ENCODE measurements at regions of chr13 and their contacts with region 1.

Region 1: GRCh38 chr13:29428310-29429181 is 166.9 kb downstream of the SLC7A1 start:
- DNase-seq: no peak
- H3K4me3 ChIP-seq: peak overlapping the region; percentile 52 to 63 (median 59)
- H3K27ac ChIP-seq: peak overlapping the region; percentile 77 to 84 (median 80)
- H3K4me1 ChIP-seq: peaks cover 8 to 39% (median 28%) of the 10 kb centered on the region in 4 donors
- H3K27me3 ChIP-seq: peaks cover 0 to 10% (median 0%) of the 10 kb centered on the region in 4 donors
- CTCF ChIP-seq: peak in 1 of 3 experiments; percentile 35
- EP300 ChIP-seq: no peak
- POLR2A ChIP-seq: no peak

Region 2: DNA sequence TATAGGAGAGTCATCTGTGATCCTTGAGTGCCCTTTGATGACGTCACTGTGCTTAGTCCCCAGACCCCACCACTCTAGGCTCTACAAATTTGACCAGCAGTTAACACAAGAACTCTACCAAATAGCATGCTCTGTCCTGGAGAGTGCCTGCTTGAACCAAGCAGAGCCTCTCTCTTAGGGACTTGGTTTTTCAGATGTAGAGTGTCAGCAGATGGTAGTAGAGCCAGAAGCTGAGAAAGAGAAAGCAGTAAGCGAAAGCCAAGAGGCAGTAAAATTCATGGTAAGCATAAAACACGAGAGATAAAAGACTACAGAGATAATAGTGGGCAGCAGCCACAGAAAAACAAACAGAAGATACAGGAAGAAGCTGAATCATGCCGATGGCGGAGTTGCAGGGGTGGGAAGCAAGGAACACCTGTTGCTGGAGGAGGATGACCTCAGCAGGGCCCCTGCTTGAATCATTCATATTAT is 26.3 kb before region 1 on chr13:
- intact Hi-C with region 1: no loop called
- DNase-seq: no peak
- H3K4me3 ChIP-seq: no peak overlapping the region
- H3K27ac ChIP-seq: no peak overlapping the region
- H3K4me1 ChIP-seq: no peaks in the 10 kb centered on the region
- H3K27me3 ChIP-seq: no peaks in the 10 kb centered on the region
- CTCF ChIP-seq: no peak
- EP300 ChIP-seq: no peak
- POLR2A ChIP-seq: no peak

Region 3: GRCh38 chr13:29465741-29466293 is 37.3 kb after region 1 on chr13:
- intact Hi-C with region 1: loop called (anchors 5 kb)
- DNase-seq: no peak
- H3K4me3 ChIP-seq: no peak overlapping the region
- H3K27ac ChIP-seq: peak overlapping the region in 1 of 4 donors; percentile 43
- H3K4me1 ChIP-seq: peaks cover 11 to 17% (median 12%) of the 10 kb centered on the region in 4 donors
- H3K27me3 ChIP-seq: no peaks in the 10 kb centered on the region
- CTCF ChIP-seq: no peak
- EP300 ChIP-seq: no peak
- POLR2A ChIP-seq: no peak

Measured in esophagus muscularis mucosa (tissue), 4 donors.